KBM-7 (cell line): ENCODE measurements at regions of chr4 and their contacts with region 1.

Region 1: DNA sequence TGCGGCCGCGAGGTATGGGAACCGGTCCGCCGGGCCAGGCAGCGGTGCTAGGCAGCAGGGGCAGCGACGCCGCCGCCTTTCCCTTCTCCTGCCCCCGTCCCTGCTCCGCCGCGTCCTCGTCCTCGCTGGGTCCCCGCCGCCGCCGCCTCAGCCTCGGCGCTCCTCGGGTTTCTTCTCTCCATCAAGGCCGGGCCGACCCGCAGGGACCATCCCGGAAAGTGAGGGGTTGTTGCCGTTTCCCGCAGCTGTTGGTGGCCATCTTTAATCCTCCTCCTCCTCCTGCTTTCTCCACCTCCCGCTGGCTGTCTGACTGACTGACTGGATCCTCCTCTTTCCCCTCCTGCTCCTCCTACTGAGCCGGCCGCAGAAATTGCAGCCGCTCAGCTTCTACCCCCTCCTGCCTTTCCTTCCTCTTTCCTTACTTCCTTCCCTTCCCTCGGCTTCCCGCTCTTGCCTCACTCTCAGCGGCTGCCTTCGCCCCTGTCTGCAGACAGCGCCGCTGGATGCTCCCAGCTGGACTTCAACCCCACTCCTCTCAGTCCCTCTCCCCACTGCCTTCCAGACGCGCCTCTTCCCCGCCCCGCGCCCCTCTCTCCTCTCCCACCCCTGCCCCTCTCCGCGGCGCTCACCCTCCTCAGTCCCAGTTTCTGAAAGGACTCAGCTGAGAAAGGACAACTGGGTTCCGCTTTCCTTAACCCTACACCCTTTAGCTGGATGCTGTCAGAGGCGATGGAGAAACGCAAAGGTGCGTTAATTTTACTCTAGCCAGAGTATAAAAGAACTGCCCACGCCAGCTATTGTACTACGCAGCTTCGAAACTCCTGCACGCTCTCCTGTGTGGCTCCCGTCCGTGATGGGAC is at the start of gene WDFY3:
- DNase-seq: peak; percentile 97

Region 2: GRCh38 chr4:84726356-84726755 is 240.3 kb before region 1 on chr4:
- in situ Hi-C with region 1: loop called (anchors 25 kb)
- DNase-seq: no peak

Region 3: GRCh38 chr4:85512446-85513205 is 546.0 kb after region 1 on chr4:
- in situ Hi-C with region 1: no loop called
- DNase-seq: no peak